Activated T-helper 1 cell treated with anti-CD3 and anti-CD28 coated beads, Interleukin-12 subunit alpha, Interleukin-12 subunit beta, Interleukin-2, Interleukin-4 antibody, amounts not matched to agents 30 ng/mL and 10 ng/mL and 1 ng/mL, durations not matched to agents 14 hours and 24 hours and 36 hours (primary cell): ENCODE measurements at regions of chr16 and their contacts with region 1.

Region 1: DNA sequence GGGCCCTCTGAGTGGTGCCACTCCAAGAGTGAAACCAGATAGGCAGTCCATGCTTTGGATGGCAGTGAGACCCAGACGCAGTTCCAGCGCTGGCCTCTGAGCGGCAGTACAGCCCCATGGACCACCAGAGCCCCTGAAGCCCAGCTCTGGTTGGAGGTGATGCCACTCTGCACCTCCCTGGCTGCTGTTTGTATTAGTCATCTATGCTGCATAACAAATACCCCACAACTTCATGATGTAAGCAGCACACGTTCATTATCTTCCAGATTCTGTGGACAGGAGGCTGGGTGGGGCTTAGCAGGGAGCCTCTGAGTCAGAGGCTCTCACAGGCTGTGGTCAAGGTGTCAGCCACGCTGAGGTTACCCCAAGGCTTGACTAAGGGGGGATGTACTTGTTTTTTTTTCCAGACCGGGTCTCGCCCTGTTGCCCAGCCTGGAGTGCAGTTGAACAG is 5.1 kb upstream of the NME4 start:
- DNase-seq: peak; percentile 46
- H3K4me3 Mint-ChIP-seq: no peak overlapping the region
- H3K27ac Mint-ChIP-seq: peak overlapping the region; percentile 63
- H3K4me1 Mint-ChIP-seq: peaks cover 15% of the 10 kb centered on the region
- H3K27me3 Mint-ChIP-seq: peaks cover 15% of the 10 kb centered on the region

Region 2: DNA sequence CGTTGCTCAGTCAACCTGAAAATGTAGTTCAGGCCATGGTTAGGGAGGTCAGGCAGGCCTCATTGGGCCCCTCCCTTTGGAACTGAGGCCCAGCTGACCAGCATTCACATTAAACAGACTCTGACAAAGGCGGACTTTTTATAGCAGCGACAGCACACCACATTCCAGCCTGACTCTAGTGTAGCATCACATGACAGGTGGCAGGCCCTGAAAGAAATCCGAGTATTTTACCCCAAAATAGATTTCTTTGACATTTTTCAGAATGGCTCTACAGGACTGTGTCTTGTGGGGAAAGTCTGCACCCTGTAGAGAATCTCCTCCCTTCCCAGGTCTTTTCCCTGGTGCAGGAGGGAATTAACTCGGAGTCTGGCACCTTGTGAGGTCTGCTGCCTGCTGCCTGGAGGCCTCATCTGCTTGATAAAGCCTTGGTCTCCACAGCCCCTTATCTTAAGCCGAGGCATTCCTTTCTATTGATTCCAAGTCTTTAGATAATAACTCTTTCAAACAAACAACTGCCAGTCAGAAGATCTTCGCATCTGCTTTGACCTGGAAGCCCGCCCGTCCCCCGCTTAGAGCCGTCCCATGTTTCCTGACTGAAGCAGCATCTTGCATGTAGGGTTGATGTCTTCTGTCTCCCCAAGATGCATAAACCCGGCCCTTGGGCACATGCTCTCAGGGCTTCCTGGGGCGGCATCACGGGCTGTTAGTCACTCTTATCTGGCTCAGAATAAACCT is 91.6 kb after region 1 on chr16:
- intact Hi-C with region 1: loop called (anchors 1 kb)
- DNase-seq: no peak
- H3K4me3 Mint-ChIP-seq: no peak overlapping the region
- H3K27ac Mint-ChIP-seq: no peak overlapping the region
- H3K4me1 Mint-ChIP-seq: peaks cover 5% of the 10 kb centered on the region
- H3K27me3 Mint-ChIP-seq: no peaks in the 10 kb centered on the region